Activated CD4-positive, alpha-beta memory T cell treated with anti-CD3 and anti-CD28 coated beads, Interleukin-2, amount 10 ng/mL, durations not matched to agents 7 days and 5 days (primary cell): ENCODE measurements at regions of chr7 and their contacts with region 1.

Region 1: GRCh38 chr7:39580149-39580874 is 14.1 kb downstream of the YAE1 start:
- DNase-seq: peak; percentile 78
- H3K4me3 Mint-ChIP-seq: no peak overlapping the region
- H3K27ac Mint-ChIP-seq: no peak overlapping the region
- H3K4me1 Mint-ChIP-seq: peaks cover 12% of the 10 kb centered on the region
- H3K27me3 Mint-ChIP-seq: no peaks in the 10 kb centered on the region

Region 2: DNA sequence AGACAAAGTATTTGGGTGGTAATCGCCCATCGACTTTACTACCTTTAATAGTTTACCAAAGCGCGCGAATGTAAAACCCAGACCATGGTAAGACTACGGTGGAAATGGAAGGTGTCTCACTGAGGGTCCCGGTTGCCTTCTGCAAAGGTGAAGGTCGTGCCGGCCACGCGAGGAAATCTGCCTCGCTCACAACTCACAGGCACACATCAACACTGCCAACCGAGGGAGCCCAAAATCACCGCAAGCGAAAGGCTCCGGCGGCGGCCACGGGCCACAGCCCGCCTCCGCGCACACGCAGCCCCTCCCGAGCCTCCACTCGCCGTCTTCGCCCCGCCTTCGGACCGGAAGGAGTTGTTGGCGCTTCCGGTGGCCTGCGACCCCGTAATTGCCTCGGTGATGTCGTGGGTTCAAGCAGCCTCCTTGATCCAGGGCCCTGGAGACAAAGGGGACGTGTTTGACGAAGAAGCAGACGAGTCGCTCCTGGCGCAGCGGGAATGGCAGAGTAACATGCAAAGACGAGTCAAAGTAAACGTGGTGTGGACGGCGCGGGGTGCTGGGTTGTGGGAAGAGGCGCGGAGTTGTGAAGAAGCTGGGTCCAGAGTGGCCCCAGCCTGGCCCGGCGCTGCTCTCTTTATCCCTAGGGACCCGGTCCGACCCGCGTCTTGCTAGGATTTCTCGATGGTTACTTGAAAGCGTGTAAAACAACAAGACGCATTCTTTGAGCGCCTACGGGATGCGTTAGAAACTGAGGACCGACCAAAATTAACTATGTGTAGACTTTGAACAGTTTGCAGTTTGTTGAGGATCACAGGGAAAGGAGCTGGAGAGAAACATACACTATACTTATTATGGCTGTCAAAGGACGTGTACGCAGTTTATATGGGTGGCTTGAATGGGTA is 14.0 kb before region 1 on chr7 and contains the start of gene YAE1:
- CTCF ChIA-PET with region 1: interaction called, 14 read pairs
- POLR2A ChIA-PET with region 1: interaction called, 7 read pairs
- DNase-seq: peak; percentile 81
- H3K4me3 Mint-ChIP-seq: peak within 1 kb of the TSS; percentile 94
- H3K27ac Mint-ChIP-seq: peak within 1 kb of the TSS; percentile 83
- H3K4me1 Mint-ChIP-seq: peaks cover 14% of the 10 kb centered on the region
- H3K27me3 Mint-ChIP-seq: peaks cover 1% of the 10 kb centered on the region
- total RNA-seq, gene YAE1: 8.4 to 9.3 TPM

Region 3: DNA sequence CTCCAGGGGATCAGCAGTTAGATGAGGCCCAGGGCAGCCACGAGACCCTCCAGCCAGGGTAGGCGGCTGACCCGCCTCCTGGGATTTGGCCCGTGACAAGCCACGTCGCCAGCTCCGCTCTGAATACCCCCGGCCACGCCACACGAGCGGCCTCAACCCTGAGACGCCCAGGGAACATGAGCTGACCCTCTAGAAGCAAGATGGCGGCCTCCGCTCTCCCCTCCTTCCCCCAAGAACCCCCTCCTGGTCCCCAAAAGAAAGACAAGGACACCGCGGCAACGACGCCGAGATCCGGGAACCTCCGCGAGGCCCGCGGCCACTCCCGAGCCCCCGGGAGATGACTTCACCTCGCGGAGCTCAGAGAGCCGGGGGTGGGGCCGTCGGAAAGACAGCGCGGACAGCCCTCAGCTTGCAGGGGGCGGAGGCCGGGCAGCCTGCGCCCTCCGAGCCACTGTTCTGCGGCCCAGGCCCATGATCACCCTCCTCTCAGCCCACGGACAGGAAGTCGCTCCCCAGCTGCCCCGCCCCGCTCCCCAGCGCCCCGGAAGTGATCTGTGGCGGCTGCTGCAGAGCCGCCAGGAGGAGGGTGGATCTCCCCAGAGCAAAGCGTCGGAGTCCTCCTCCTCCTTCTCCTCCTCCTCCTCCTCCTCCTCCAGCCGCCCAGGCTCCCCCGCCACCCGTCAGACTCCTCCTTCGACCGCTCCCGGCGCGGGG is 42.9 kb after region 1 on chr7 and contains the start of gene RALA:
- CTCF ChIA-PET with region 1: interaction called, 30 read pairs
- POLR2A ChIA-PET with region 1: interaction called, 24 read pairs
- DNase-seq: peak; percentile 91
- H3K4me3 Mint-ChIP-seq: peak within 1 kb of the TSS; percentile 90
- H3K27ac Mint-ChIP-seq: peak within 1 kb of the TSS; percentile 88
- H3K4me1 Mint-ChIP-seq: peaks cover 34% of the 10 kb centered on the region
- H3K27me3 Mint-ChIP-seq: no peaks in the 10 kb centered on the region
- total RNA-seq, gene RALA: 27.8 to 29.6 TPM

Region 4: DNA sequence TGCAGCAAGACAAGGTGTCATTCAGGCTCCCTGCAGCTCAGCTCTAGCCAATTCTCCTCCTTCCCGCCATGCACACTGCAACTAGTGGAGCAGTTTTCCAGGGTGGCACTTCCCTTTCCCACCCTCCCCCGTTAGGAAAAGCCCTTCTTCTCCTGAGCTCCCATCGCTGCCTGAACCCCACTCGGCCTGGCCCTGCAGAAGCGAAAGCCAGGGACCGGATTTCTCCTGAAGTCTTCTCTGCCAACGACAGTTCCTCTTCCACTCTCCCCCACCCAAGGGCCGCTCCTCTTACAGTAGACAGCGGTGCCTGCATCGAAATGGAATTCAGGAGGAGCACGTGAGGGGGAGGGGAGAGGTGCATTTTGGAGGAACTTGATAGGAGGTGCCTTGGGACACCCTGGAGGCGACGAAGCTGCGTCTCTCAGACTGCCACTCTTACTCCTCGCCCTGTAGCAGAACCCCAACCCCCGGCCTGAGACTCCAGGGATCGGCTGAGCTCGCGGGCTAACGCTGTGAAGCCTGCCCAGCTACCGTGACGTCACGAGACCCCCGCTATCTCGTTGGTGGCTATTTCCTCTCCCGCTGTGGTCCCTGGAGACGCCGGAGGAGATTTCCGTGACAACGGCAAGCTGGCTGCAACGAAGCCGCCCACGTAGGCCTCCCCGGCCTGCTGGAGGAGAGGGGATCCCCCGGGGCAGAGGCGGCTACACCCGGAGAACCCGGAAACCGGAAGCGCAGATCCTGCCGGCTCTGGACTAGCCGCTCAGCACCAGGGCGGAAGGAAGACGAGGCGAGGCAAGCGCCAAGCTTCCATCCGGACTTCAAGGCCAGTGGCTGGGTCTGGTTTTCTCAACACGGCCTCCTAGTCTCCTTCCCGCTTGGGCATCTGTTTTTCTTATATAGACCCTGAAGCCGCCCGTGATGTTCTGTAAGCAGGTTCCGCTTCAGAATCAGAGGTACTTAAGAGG is 152.8 kb after region 1 on chr7:
- CTCF ChIA-PET with region 1: interaction called, 70 read pairs
- POLR2A ChIA-PET with region 1: interaction called, 12 read pairs
- DNase-seq: peak; percentile 91
- H3K4me3 Mint-ChIP-seq: peak overlapping the region; percentile 90
- H3K27ac Mint-ChIP-seq: peak overlapping the region; percentile 83
- H3K4me1 Mint-ChIP-seq: peaks cover 42% of the 10 kb centered on the region
- H3K27me3 Mint-ChIP-seq: no peaks in the 10 kb centered on the region

Region 5: DNA sequence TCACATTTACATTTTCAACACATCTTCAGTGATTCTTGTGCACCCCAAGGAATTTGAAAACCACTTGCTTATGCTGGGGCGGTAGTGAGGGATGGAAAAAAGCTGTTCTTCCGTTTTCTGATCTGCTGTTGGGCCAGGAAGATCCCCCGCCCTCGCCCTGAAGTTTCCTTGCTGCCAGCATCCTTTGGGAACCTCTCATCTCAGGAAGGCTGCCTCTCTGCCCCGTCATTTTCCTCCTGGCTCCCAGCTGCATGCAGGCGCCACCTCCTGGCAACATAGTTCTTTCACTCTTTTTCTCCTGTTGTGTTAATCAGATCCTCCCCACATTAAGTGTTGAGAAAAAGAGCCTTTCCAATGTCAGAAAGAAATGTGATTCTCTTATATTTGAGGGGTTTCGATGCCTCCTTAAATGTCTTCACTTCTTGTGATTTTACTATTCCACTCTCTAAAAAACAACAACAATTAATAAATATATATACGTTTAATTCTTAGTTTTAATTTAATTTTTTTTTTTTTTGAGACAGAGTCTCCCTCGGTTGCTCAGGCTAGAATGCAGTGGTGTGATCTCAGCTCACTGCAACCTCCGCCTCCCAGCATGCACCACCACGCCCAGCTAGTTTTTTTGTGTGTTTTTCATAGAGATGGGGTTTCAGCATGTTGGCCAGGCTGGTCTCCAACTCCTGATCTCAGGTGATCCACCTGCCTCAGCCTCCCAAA is 165.9 kb after region 1 on chr7:
- CTCF ChIA-PET with region 1: interaction called, 316 read pairs
- POLR2A ChIA-PET with region 1: interaction called, 7 read pairs
- DNase-seq: peak; percentile 55
- H3K4me3 Mint-ChIP-seq: no peak overlapping the region
- H3K27ac Mint-ChIP-seq: no peak overlapping the region
- H3K4me1 Mint-ChIP-seq: peaks cover 4% of the 10 kb centered on the region
- H3K27me3 Mint-ChIP-seq: no peaks in the 10 kb centered on the region

Region 6: DNA sequence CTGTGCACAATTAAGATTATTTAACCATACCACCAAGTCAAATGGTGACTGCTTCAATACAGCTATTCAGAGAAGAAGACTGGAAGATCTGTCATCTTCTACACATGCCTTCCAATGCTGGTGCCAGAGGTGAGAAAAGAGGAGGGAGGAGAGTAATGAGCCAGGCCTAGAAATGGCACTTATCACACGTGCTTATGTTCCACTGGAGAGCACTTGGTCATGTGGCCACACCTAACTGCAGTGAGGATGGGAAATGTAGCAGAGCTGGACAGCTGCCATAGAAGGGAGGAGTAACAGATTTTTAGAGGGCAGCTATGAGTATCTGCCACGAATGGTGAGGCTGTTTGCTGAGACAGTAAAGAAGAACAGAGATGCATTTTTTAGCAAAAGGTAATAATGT is 477.0 kb after region 1 on chr7:
- CTCF ChIA-PET with region 1: interaction called, 13 read pairs
- POLR2A ChIA-PET with region 1: no interaction called
- DNase-seq: no peak
- H3K4me3 Mint-ChIP-seq: no peak overlapping the region
- H3K27ac Mint-ChIP-seq: no peak overlapping the region
- H3K4me1 Mint-ChIP-seq: peaks cover 3% of the 10 kb centered on the region
- H3K27me3 Mint-ChIP-seq: no peaks in the 10 kb centered on the region